Naive thymus-derived CD4-positive, alpha-beta T cell (primary cell): ENCODE measurements at regions of chr3 and their contacts with region 1.

Region 1: GRCh38 chr3:71875461-71875947 is 90.6 kb upstream of the PROK2 start:
- DNase-seq: peak; percentile 55 to 81 (median 73)
- ATAC-seq: peak; percentile 98
- H3K4me3 ChIP-seq: no peak overlapping the region
- H3K4me3 Mint-ChIP-seq: no peak overlapping the region
- H3K27ac ChIP-seq: no peak overlapping the region
- H3K27ac Mint-ChIP-seq: no peak overlapping the region
- H3K4me1 ChIP-seq: no peaks in the 10 kb centered on the region
- H3K4me1 Mint-ChIP-seq: peaks cover 0 to 20% (median 10%) of the 10 kb centered on the region in 7 donors
- H3K27me3 ChIP-seq: no peaks in the 10 kb centered on the region
- H3K27me3 Mint-ChIP-seq: peaks cover 0 to 4% (median 0%) of the 10 kb centered on the region in 5 donors

Region 2: GRCh38 chr3:71389911-71390573 is 485.5 kb before region 1 on chr3:
- CTCF ChIA-PET with region 1: no interaction called
- POLR2A ChIA-PET with region 1: no interaction called
- intact Hi-C with region 1: no loop called
- DNase-seq: peak in 8 of 9 donors; percentile 25 to 67 (median 49)
- ATAC-seq: peak; percentile 55
- H3K4me3 ChIP-seq: peak overlapping the region; percentile 51
- H3K4me3 Mint-ChIP-seq: peak overlapping the region; percentile 68 to 88 (median 83)
- H3K27ac ChIP-seq: peak overlapping the region; percentile 81
- H3K27ac Mint-ChIP-seq: peak overlapping the region; percentile 75 to 99 (median 90)
- H3K4me1 ChIP-seq: peaks cover 29 to 74% of the 10 kb centered on the region in 2 donors
- H3K4me1 Mint-ChIP-seq: peaks cover 27 to 93% (median 83%) of the 10 kb centered on the region in 7 donors
- H3K27me3 ChIP-seq: no peaks in the 10 kb centered on the region
- H3K27me3 Mint-ChIP-seq: peaks cover 0 to 22% (median 0%) of the 10 kb centered on the region in 5 donors

Region 3: GRCh38 chr3:71710906-71711494 is 164.5 kb before region 1 on chr3:
- CTCF ChIA-PET with region 1: interaction called, 18 read pairs
- POLR2A ChIA-PET with region 1: no interaction called
- intact Hi-C with region 1: loop called in 1 of 2 experiments (anchors 1 kb)
- DNase-seq: peak in 7 of 9 donors; percentile 32 to 57 (median 40)
- ATAC-seq: peak; percentile 81
- H3K4me3 ChIP-seq: no peak overlapping the region
- H3K4me3 Mint-ChIP-seq: peak overlapping the region in 5 of 10 donors; percentile 6 to 48 (median 32)
- H3K27ac ChIP-seq: no peak overlapping the region
- H3K27ac Mint-ChIP-seq: peak overlapping the region in 8 of 9 donors; percentile 4 to 80 (median 62)
- H3K4me1 ChIP-seq: peaks cover 19 to 29% of the 10 kb centered on the region in 2 donors
- H3K4me1 Mint-ChIP-seq: peaks cover 40 to 91% (median 53%) of the 10 kb centered on the region in 7 donors
- H3K27me3 ChIP-seq: no peaks in the 10 kb centered on the region
- H3K27me3 Mint-ChIP-seq: no peaks in the 10 kb centered on the region

Region 4: GRCh38 chr3:72270072-72270681 is 394.7 kb after region 1 on chr3:
- CTCF ChIA-PET with region 1: no interaction called
- POLR2A ChIA-PET with region 1: no interaction called
- intact Hi-C with region 1: loop called in 1 of 2 experiments (anchors 5 kb)
- DNase-seq: no peak
- ATAC-seq: peak; percentile 72
- H3K4me3 ChIP-seq: no peak overlapping the region
- H3K4me3 Mint-ChIP-seq: peak overlapping the region in 5 of 10 donors; percentile 26 to 55 (median 49)
- H3K27ac ChIP-seq: no peak overlapping the region
- H3K27ac Mint-ChIP-seq: peak overlapping the region in 6 of 9 donors; percentile 5 to 83 (median 34)
- H3K4me1 ChIP-seq: peaks cover 0 to 42% of the 10 kb centered on the region in 2 donors
- H3K4me1 Mint-ChIP-seq: peaks cover 38 to 80% (median 74%) of the 10 kb centered on the region in 7 donors
- H3K27me3 ChIP-seq: no peaks in the 10 kb centered on the region
- H3K27me3 Mint-ChIP-seq: no peaks in the 10 kb centered on the region

Region 5: DNA sequence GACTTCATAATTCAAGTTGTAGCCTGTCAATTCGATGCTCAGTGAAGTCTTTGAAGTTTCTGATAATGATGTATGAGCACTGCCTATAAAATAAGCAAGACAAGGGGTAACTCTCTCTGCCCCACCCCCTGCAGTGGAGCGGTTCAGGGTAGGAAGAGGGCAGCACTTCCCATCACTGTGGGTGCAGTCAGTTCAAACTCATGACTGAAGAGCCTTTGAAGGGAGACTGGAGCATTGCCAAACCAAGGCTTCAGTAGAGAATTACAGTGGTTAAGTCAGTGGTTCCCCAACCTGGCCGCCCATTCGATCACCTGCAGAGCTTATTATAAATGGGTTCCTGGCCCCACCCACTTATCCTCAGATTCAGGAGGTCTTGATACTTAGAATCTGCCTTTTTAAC is 782.2 kb after region 1 on chr3:
- CTCF ChIA-PET with region 1: interaction called, 4 read pairs
- POLR2A ChIA-PET with region 1: no interaction called
- intact Hi-C with region 1: loop called in 1 of 2 experiments (anchors 2 kb)
- DNase-seq: peak in 8 of 9 donors; percentile 19 to 86 (median 75)
- ATAC-seq: peak; percentile 96
- H3K4me3 ChIP-seq: no peak overlapping the region
- H3K4me3 Mint-ChIP-seq: peak overlapping the region in 6 of 10 donors; percentile 22 to 72 (median 41)
- H3K27ac ChIP-seq: no peak overlapping the region
- H3K27ac Mint-ChIP-seq: peak overlapping the region in 2 of 9 donors; percentile 1 to 6
- H3K4me1 ChIP-seq: peaks cover 0 to 9% of the 10 kb centered on the region in 2 donors
- H3K4me1 Mint-ChIP-seq: peaks cover 12 to 38% (median 19%) of the 10 kb centered on the region in 7 donors
- H3K27me3 ChIP-seq: no peaks in the 10 kb centered on the region
- H3K27me3 Mint-ChIP-seq: peaks cover 6 to 12% (median 7%) of the 10 kb centered on the region in 5 donors

Region 6: DNA sequence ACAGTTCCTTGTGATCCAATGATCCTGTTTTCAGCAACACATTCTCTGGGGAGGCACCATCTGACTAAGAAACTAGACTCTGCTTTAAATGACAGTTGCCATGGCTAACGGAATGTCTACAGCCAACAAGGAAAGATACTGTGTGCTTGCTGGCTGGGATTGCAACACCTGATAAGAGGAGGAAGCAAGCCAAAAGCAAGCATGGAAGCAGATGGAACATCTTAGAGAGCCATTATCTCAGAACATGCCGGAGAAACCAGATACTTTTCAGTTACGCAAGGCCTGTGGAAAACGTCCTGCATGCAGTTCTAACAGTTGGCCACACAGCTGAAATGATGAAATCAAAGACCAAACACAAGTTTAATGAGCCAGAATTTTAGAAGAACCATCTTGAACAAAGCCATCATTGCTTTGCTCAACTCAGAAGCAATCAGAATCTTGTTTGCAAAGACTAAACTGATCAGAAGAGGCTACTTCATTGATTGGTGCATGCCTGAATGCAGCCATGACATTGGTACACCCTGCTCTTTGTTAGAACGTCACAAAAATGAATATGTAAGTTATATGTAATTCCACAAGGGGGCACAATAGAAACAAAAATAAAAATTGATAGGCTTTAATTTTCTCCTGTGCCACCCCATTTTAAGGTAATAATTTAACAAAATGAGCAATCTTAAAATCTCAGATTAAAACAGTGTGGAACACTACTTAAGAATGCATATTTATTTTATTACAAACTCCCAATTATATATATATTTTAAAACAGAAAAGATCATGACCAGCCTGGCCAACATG is 1063.2 kb after region 1 on chr3:
- CTCF ChIA-PET with region 1: interaction called, 4 read pairs
- POLR2A ChIA-PET with region 1: no interaction called
- intact Hi-C with region 1: loop called in 1 of 2 experiments (anchors 5 kb)
- DNase-seq: peak in 7 of 9 donors; percentile 48 to 76 (median 62)
- ATAC-seq: peak; percentile 99
- H3K4me3 ChIP-seq: no peak overlapping the region
- H3K4me3 Mint-ChIP-seq: no peak overlapping the region
- H3K27ac ChIP-seq: no peak overlapping the region
- H3K27ac Mint-ChIP-seq: no peak overlapping the region
- H3K4me1 ChIP-seq: no peaks in the 10 kb centered on the region
- H3K4me1 Mint-ChIP-seq: no peaks in the 10 kb centered on the region
- H3K27me3 ChIP-seq: no peaks in the 10 kb centered on the region
- H3K27me3 Mint-ChIP-seq: peaks cover 0 to 28% (median 0%) of the 10 kb centered on the region in 5 donors